AG04450 (cell line): ENCODE measurements at regions of chr9 and their contacts with region 1.

Region 1: DNA sequence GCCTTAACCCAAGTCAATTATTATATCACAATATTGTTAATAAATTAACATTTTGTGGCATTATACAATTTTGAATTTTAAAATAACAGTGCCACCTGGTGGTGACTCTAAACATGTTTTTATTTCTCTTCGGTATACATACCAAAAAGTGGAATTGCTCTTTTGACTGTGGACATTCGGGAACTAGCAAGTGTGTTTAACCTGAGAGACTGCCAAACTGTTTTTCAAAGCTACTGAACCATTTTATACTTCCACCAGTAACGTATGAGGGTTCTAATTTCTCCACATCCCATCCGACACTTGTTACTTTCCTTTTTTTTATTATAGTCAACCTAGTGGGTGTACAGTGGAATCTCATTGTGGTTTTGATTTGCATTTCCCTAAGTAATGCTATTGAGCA is 18.3 kb upstream of the HSDL2 start:
- DNase-seq: no peak
- H3K4me3 ChIP-seq: no peak overlapping the region
- H3K27ac ChIP-seq: no peak overlapping the region
- H3K27me3 ChIP-seq: no peaks in the 10 kb centered on the region
- CTCF ChIP-seq: peak; percentile 44

Region 2: DNA sequence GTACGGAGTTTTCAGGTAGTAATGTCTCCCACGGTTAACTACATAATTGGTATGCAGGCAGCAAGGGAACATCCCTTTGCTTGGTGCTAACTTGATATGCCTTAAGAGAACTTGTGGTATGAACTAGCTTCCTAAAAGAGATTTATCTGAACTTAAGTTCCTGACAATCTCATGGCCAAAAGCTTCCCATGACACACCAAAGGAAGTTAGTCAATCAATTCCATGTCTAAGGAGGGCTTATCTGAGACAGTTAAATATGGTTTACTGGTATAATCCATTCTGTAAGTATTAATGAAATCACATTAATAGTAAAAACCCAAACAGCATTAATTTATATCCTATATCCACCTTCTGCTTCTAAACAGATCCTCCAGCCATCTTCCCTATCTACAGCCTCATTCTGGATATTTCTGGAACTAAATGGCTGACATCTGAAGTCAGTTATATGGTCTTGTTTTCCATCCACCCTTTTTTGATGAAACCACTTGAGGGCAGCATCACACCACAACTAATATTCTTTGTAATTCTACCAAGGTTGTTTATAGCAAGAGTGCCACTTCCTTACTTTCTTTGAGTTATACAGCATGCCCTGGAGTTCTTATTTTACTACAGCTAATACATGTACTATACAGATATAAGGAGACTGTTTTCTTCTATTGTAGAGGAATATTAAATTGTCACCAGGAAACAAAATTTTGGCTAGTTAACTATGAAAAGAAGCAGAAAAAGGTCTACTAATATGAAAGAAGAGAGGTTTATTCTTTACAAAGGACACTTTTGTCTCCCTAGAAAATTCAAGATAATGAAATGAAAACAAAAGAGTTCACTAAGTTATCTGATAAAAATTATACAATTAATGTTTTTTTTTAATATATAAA is 601.6 kb before region 1 on chr9:
- CTCF ChIA-PET with region 1: interaction called, 17 read pairs
- POLR2A ChIA-PET with region 1: no interaction called
- DNase-seq: peak; percentile 74
- H3K4me3 ChIP-seq: no peak overlapping the region
- H3K27ac ChIP-seq: no peak overlapping the region
- H3K27me3 ChIP-seq: no peaks in the 10 kb centered on the region
- CTCF ChIP-seq: peak; percentile 72

Region 3: GRCh38 chr9:112086627-112087026 is 275.0 kb before region 1 on chr9:
- CTCF ChIA-PET with region 1: interaction called, 71 read pairs
- POLR2A ChIA-PET with region 1: no interaction called
- DNase-seq: no peak
- H3K4me3 ChIP-seq: no peak overlapping the region
- H3K27ac ChIP-seq: no peak overlapping the region
- H3K27me3 ChIP-seq: no peaks in the 10 kb centered on the region
- CTCF ChIP-seq: peak; percentile 57

Region 4: GRCh38 chr9:112091810-112092209 is 269.8 kb before region 1 on chr9:
- CTCF ChIA-PET with region 1: interaction called, 87 read pairs
- POLR2A ChIA-PET with region 1: no interaction called
- DNase-seq: no peak
- H3K4me3 ChIP-seq: no peak overlapping the region
- H3K27ac ChIP-seq: no peak overlapping the region
- H3K27me3 ChIP-seq: no peaks in the 10 kb centered on the region
- CTCF ChIP-seq: peak; percentile 48

Region 5: DNA sequence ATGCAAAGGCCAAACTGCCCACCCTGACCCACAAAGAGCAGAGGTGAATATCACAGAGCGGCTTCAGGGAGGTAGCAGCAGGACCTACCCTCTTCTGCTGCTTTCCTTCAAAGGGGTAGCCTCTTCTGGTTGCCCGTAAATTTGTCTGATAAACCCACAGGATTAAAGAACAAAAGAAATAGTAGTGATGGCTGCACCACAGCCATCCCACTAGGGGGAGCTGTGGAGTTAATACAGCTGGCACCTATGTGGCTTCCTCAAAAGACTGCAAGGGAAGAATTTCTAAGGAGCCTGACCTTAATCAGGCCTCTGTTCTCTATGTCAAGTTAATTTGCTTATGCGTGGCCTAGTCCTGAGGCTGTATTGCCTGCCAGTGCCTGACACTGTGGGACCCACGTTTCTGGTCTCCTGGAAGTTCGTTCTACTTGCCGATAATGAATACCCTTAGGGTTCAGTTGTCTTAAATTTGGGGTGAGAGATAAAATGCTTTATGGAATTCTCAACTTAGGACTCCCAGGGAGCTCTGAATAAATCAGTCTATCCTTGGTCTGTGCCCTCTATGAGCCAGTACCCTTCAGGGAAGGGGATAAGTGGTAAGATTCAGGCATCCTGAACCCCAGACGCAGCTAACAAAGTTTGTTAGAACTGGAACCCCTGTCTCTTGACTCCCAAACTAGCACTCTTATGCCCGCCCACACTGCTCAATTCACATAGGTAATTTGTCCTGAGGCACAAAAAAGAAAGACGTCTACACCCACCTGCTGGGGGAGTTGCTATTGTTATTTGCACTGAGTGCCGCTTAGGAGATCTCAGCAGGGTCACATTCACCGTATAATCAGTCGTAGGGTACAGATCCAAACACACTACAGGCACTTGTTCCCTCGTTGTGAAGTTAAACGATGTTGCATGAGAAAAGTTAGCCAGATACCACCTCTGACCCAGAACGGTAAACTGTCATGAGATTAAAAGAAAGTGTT is 263.6 kb before region 1 on chr9:
- CTCF ChIA-PET with region 1: interaction called, 87 read pairs
- POLR2A ChIA-PET with region 1: no interaction called
- DNase-seq: peak; percentile 61
- H3K4me3 ChIP-seq: no peak overlapping the region
- H3K27ac ChIP-seq: no peak overlapping the region
- H3K27me3 ChIP-seq: no peaks in the 10 kb centered on the region
- CTCF ChIP-seq: peak; percentile 93

Region 6: GRCh38 chr9:112112941-112113681 is 248.5 kb before region 1 on chr9:
- CTCF ChIA-PET with region 1: interaction called, 17 read pairs
- POLR2A ChIA-PET with region 1: no interaction called
- DNase-seq: no peak
- H3K4me3 ChIP-seq: no peak overlapping the region
- H3K27ac ChIP-seq: no peak overlapping the region
- H3K27me3 ChIP-seq: no peaks in the 10 kb centered on the region
- CTCF ChIP-seq: peak; percentile 34; the same call in 1 of the 2 replicates

Region 7: DNA sequence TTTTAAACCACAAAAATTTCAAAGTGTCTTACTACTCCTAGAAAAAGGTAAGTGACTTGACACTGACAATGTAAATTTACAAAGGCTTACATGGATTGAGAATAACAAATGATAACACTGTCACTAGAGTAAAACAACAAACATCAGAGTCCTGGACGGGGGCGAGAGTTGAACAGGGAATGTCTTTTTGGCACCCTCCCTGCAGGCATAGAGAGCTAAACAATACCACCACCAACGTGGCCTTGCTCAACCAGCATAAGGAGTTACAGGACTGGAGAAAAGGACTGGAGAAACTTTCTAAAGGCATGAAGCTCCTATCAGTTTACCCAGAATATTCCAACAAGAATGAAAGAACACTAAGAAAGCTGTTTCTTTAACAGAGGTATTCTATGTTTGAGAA is 83.4 kb before region 1 on chr9:
- CTCF ChIA-PET with region 1: no interaction called
- POLR2A ChIA-PET with region 1: no interaction called
- DNase-seq: no peak
- H3K4me3 ChIP-seq: no peak overlapping the region
- H3K27ac ChIP-seq: no peak overlapping the region
- H3K27me3 ChIP-seq: no peaks in the 10 kb centered on the region
- CTCF ChIP-seq: no peak

Region 8: DNA sequence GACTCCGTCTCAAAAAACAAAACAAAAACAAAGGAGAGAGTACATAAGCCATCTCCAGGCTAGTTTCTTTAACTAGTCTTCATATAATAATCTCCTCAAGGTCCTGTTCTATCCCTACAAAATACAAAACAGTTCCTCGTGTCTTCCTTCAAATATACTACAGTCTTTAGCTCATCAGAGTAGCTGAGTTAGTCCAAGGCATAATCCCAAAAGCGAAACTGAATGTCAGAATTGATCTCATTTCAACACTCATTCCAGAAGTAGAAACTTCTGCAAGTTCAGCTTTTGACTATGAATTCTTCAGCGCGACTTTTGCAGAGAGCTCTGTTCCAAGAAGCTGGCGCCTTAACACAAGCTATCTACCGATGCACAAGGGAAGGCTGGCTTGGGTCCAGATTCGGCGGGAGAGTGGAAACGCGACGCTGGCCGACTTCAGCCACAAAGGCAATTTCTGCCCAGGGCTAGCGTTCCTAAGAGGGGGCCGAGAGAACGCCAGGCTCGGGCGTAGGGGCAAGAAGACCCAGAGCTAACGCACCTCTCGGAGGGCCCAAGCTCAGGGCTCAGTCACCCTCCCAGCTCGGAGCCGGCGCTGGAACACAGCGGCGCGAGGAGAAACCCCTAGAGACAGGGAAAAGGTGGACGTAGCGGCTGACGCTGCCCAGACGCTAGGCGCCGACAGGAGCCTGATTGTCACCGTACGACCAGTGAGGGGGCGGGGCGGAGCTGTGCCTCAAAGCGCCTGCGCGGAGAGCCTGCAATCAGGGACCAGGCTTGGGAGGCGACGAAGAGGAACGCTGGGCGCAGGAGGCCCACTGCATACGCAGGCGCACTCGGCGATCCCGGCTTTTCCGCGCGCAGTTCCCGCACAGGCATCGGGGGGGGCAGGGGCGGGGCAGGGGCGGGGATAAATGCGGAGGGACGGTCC is 17.8 kb after region 1 on chr9:
- CTCF ChIA-PET with region 1: interaction called, 13 read pairs
- POLR2A ChIA-PET with region 1: no interaction called
- DNase-seq: peak; percentile 95
- H3K4me3 ChIP-seq: peak overlapping the region; percentile 91
- H3K27ac ChIP-seq: peak overlapping the region; percentile 97
- H3K27me3 ChIP-seq: no peaks in the 10 kb centered on the region
- CTCF ChIP-seq: no peak

Region 9: GRCh38 chr9:112605518-112605917 is 243.9 kb after region 1 on chr9:
- CTCF ChIA-PET with region 1: no interaction called
- POLR2A ChIA-PET with region 1: no interaction called
- DNase-seq: no peak
- H3K4me3 ChIP-seq: no peak overlapping the region
- H3K27ac ChIP-seq: no peak overlapping the region
- H3K27me3 ChIP-seq: no peaks in the 10 kb centered on the region
- CTCF ChIP-seq: no peak